ENCODE measurements at regions of chr12 and their contacts with region 1.

Region 1: GRCh38 chr12:119634743-119635142 is 33.2 kb upstream of the PRKAB1 start:
- DNase-seq: no peak
- H3K4me3 Mint-ChIP-seq: no peak overlapping the region
- H3K27ac Mint-ChIP-seq: no peak overlapping the region
- H3K4me1 Mint-ChIP-seq: no peaks in the 10 kb centered on the region
- H3K27me3 Mint-ChIP-seq: peaks cover 10% of the 10 kb centered on the region

Region 2: GRCh38 chr12:119649202-119649808 is 14.6 kb after region 1 on chr12:
- CTCF ChIA-PET with region 1: interaction called, 11 read pairs
- intact Hi-C with region 1: no loop called
- DNase-seq: no peak
- H3K4me3 Mint-ChIP-seq: no peak overlapping the region
- H3K27ac Mint-ChIP-seq: no peak overlapping the region
- H3K4me1 Mint-ChIP-seq: no peaks in the 10 kb centered on the region
- H3K27me3 Mint-ChIP-seq: no peaks in the 10 kb centered on the region